ENCODE measurements at regions of chr6 and their contacts with region 1.

Region 1: GRCh38 chr6:133973109-133973971 is 20.3 kb downstream of the TBPL1 start:
- DNase-seq: no peak
- H3K4me3 ChIP-seq: no peak overlapping the region
- H3K27ac ChIP-seq: peak overlapping the region; percentile 54 to 55
- H3K4me1 ChIP-seq: peaks cover 4% of the 10 kb centered on the region
- H3K27me3 ChIP-seq: no peaks in the 10 kb centered on the region
- CTCF ChIP-seq: peak; percentile 58 to 94 (median 90)
- POLR2A ChIP-seq: no peak

Region 2: GRCh38 chr6:133833949-133834359 is 139.4 kb before region 1 on chr6:
- intact Hi-C with region 1: no loop called
- DNase-seq: no peak
- H3K4me3 ChIP-seq: no peak overlapping the region
- H3K27ac ChIP-seq: no peak overlapping the region
- H3K4me1 ChIP-seq: no peaks in the 10 kb centered on the region
- H3K27me3 ChIP-seq: no peaks in the 10 kb centered on the region
- CTCF ChIP-seq: no peak
- POLR2A ChIP-seq: no peak

Region 3: DNA sequence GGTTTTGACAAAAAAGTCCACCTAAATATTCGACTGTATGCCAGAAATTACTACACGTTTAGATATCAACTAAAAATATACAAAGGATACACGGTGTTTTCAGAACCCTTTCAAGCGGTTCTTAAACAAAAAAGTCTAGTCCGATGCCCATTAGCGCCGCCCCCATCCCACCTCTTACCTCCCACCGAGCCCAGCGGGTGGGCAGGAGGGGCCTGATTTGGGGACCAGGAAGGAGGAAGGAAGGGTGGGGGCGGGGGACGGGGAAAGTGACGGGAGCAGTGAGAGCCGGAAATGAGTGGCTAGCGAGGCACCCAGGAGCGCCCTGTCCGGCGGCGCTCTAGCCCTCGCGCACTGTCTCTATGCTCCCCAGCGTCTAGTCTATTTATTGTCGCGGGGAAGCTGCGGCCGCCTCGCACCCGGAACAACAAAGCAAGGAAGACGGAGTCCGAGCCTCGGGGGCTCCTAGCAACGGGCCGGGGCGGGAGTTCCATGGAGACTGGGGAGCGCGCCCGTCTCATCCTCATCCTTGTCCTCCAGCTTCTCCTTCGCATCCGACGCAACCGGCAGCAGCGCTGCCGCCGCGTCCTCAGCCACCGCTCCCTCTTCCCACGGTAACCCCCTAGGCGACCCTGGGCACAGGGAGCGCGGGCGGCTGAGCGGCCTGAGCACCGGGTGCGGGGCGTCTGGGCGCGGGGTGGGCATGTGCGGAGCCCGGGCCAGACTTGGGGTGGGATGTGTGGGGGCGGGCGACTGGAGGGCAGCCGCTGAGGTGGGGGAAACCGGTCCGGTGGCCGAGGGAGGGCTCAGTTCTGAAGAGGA is 20.3 kb before region 1 on chr6 and contains the start of gene TBPL1:
- intact Hi-C with region 1: loop called (anchors 1 kb)
- DNase-seq: peak; percentile 94
- H3K4me3 ChIP-seq: peak within 1 kb of the TSS; percentile 78 to 96
- H3K27ac ChIP-seq: peak within 1 kb of the TSS; percentile 93 to 94
- H3K4me1 ChIP-seq: peaks cover 2% of the 10 kb centered on the region
- H3K27me3 ChIP-seq: no peaks in the 10 kb centered on the region
- CTCF ChIP-seq: no peak
- POLR2A ChIP-seq: peak; percentile 43
- total RNA-seq, gene TBPL1: 27.7 to 30.8 TPM

Region 4: GRCh38 chr6:134063966-134064445 is 90.7 kb after region 1 on chr6:
- intact Hi-C with region 1: loop called (anchors 1 kb)
- DNase-seq: peak; percentile 63
- H3K4me3 ChIP-seq: no peak overlapping the region
- H3K27ac ChIP-seq: peak overlapping the region in 1 of 2 donors; percentile 34
- H3K4me1 ChIP-seq: no peaks in the 10 kb centered on the region
- H3K27me3 ChIP-seq: no peaks in the 10 kb centered on the region
- CTCF ChIP-seq: peak; percentile 32 to 87 (median 79)
- POLR2A ChIP-seq: no peak

Measured in prostate gland (tissue), 2 donors.